Sigmoid colon (tissue), 7 donors: ENCODE measurements at regions of chrX and their contacts with region 1.

Region 1: GRCh38 chrX:102712952-102713625 is 841 bp downstream of the GPRASP2 start:
- DNase-seq: peak; percentile 88
- H3K4me3 ChIP-seq: peak overlapping the region; percentile 56 to 75 (median 60)
- H3K27ac ChIP-seq: peak overlapping the region; percentile 82 to 92 (median 87)
- H3K4me1 ChIP-seq: peaks cover 0 to 6% (median 2%) of the 10 kb centered on the region in 4 donors
- H3K27me3 ChIP-seq: peaks cover 0 to 2% (median 0%) of the 10 kb centered on the region in 3 donors
- CTCF ChIP-seq: peak; percentile 29 to 55 (median 53)
- EP300 ChIP-seq: no peak
- POLR2A ChIP-seq: no peak

Region 2: DNA sequence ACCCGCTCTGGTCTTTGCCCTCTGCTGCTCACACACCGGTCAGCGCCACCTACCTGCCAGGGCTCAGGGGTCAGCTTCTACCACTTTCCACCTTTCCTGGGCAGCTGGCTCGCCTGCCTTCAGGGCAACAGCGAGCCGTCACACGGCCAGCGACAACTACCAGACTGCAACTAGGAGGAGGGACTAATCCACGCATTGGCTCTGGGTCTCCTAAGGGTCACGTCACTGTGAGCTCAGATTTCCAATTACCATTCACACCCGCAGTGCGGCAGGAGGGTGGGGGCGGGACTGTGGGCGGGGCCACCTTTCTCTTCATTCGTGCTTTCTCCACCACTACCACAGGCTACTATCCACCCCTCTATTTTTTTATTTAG is 557.3 kb before region 1 on chrX and contains the start of gene BEX5:
- intact Hi-C with region 1: no loop called
- DNase-seq: peak; percentile 78
- H3K4me3 ChIP-seq: peak within 1 kb of the TSS; percentile 23 to 45 (median 30)
- H3K27ac ChIP-seq: peak within 1 kb of the TSS in 2 of 4 donors; percentile 29 to 42
- H3K4me1 ChIP-seq: peaks cover 0 to 7% (median 0%) of the 10 kb centered on the region in 4 donors
- H3K27me3 ChIP-seq: peaks cover 0 to 4% (median 3%) of the 10 kb centered on the region in 3 donors
- CTCF ChIP-seq: no peak
- EP300 ChIP-seq: no peak
- POLR2A ChIP-seq: no peak
- total RNA-seq, gene BEX5: 1.4 to 4.6 (median 2.2) TPM

Region 3: GRCh38 chrX:102599084-102599950 is 113.8 kb before region 1 on chrX and contains the start of gene ARMCX5:
- intact Hi-C with region 1: loop called (anchors 2 kb)
- DNase-seq: peak; percentile 83
- H3K4me3 ChIP-seq: peak within 1 kb of the TSS; percentile 37 to 59 (median 54)
- H3K27ac ChIP-seq: peak within 1 kb of the TSS; percentile 75 to 80 (median 76)
- H3K4me1 ChIP-seq: peaks cover 0 to 4% (median 0%) of the 10 kb centered on the region in 4 donors
- H3K27me3 ChIP-seq: no peaks in the 10 kb centered on the region
- CTCF ChIP-seq: peak in 2 of 4 experiments; percentile 13 to 21
- EP300 ChIP-seq: no peak
- POLR2A ChIP-seq: peak; percentile 27 to 41
- total RNA-seq, gene ARMCX5: 5.0 to 10.0 (median 6.9) TPM

Region 4: GRCh38 chrX:103711533-103712369 is 998.7 kb after region 1 on chrX:
- intact Hi-C with region 1: no loop called
- DNase-seq: no peak
- H3K4me3 ChIP-seq: no peak overlapping the region
- H3K27ac ChIP-seq: no peak overlapping the region
- H3K4me1 ChIP-seq: peaks cover 0 to 4% (median 3%) of the 10 kb centered on the region in 4 donors
- H3K27me3 ChIP-seq: no peaks in the 10 kb centered on the region
- CTCF ChIP-seq: peak in 2 of 4 experiments; percentile 23 to 35
- EP300 ChIP-seq: no peak
- POLR2A ChIP-seq: no peak